Left cardiac atrium (tissue), 4 donors: ENCODE measurements at regions of chr19 and their contacts with region 1.

Region 1: DNA sequence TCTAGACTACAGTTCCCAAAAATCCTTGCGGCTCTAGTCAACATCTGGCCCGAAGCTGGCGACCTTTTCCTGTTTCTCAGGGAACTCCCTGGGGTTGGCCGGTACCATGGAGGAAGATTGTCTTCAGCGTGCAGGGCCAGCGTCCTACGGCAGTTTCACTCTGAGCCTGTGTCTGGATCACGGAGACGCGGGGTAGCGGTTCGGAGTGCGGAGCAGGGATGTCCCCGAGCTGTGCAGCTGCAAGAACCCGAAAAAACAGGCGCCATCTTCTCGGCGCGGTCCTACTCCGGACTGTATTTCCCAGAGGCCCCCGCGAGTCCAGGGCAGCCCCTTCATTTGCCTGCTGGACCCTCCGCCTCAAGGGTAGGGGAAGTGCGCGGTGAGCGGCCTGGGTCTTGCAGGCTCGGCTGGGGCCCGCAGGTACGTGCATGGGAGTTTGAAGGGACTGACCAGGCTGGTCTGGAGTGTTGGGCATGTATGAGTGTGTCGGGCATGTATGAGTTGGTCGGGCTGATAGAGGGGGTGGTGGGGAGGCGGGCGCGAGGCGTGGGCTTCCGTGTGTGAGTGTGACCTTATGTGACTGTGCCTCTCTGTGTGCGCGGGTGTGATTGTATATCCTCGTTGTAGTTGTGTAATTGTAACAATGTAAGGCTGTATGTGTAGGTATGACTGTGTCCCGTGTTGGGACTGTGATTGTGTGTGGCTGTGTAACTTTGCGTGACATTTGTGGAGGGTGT is at the start of gene ZNF383:
- DNase-seq: peak; percentile 90
- ATAC-seq: peak; percentile 98 to 99
- total RNA-seq, gene ZNF383: 8.5 to 10.5 TPM

Region 2: GRCh38 chr19:36805364-36805763 is 412.7 kb before region 1 on chr19:
- intact Hi-C with region 1: no loop called
- DNase-seq: no peak
- ATAC-seq: no peak

Region 3: GRCh38 chr19:37074819-37075362 is 143.1 kb before region 1 on chr19:
- intact Hi-C with region 1: no loop called
- DNase-seq: no peak
- ATAC-seq: no peak

Region 4: GRCh38 chr19:37148214-37148613 is 69.8 kb before region 1 on chr19:
- intact Hi-C with region 1: no loop called
- DNase-seq: no peak
- ATAC-seq: no peak

Region 5: DNA sequence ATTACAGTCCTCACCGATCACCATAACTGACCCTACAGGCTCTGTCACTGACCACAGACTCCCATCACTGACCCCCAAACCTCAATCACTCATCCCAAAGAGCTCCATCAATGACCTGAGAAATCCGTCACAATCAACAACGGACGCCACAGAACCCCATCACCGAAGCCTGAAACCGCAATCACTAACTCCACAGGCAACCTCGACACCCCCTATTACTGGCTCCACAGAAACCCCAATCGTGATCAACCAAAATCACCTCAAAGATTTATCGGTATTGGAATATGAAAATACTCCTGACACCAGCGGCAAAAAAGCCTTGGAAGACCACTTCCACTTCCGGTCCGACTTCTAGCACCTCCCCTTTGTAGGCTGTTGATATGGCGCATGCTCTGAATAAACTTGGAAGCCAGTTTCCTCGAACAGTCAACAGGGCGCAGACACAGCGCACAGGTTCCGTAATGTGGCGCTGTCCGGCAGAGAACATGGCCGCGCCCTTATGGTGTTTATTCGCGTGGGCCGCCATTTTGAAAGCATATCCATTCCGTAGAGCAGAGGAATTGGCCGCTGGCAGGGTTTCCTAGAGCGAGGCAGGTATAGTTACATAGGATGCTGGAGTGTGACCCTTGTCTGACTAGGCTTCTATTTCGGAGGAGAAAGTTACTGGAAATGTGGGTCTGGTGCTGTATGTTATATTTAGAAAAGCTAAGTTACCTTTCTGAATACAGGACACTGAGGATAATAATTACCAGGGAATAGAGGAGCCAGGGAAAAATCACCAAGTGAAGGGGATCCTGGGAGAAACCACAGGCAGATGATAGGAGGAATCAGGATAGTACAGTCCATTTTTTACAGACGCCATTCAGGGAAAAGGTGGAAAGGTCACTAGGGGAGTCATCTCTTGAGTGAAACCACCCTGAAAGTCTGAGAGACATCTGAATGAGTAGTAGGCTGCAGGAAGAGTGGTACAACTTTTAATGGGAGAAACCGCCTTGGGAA is 45.4 kb before region 1 on chr19 and contains the start of gene ZNF585A:
- intact Hi-C with region 1: loop called in 1 of 2 experiments (anchors 5 kb)
- DNase-seq: peak; percentile 93
- ATAC-seq: peak; percentile 100
- total RNA-seq, gene ZNF585A: 6.6 to 11.6 TPM